ENCODE measurements at regions of chr16 and their contacts with region 1.

Region 1: GRCh38 chr16:56700195-56700594 is 17.9 kb downstream of the MT1X start:
- DNase-seq: no peak
- H3K4me3 ChIP-seq: no peak overlapping the region
- H3K4me3 Mint-ChIP-seq: no peak overlapping the region
- H3K27ac ChIP-seq: no peak overlapping the region
- H3K27ac Mint-ChIP-seq: peak overlapping the region in 2 of 8 donors; percentile 9 to 13
- H3K4me1 ChIP-seq: peaks cover 11% of the 10 kb centered on the region
- H3K4me1 Mint-ChIP-seq: peaks cover 6 to 11% (median 10%) of the 10 kb centered on the region in 3 donors
- H3K27me3 ChIP-seq: no peaks in the 10 kb centered on the region
- H3K27me3 Mint-ChIP-seq: no peaks in the 10 kb centered on the region

Region 2: DNA sequence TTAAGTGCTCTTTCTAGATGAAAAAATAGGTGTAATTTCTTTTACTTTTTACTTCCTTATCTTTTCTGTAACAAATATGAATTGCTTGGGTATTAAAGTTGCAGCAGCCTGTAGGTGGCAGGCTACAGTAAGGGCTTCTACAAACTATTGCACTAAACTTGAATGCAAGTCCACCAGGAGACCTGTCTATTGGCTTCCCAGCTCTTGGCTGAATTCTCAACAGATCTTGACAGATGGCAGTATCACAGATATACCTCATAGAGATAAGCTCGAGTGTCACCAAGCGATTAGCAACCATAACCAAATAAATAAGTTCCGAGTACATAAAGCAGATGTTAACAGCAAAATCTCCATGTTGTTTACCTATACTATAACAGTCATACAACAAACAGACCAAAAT is 186.2 kb before region 1 on chr16:
- CTCF ChIA-PET with region 1: interaction called, 22 read pairs
- POLR2A ChIA-PET with region 1: no interaction called
- DNase-seq: peak; percentile 7 to 63 (median 42)
- H3K4me3 ChIP-seq: no peak overlapping the region
- H3K4me3 Mint-ChIP-seq: no peak overlapping the region
- H3K27ac ChIP-seq: no peak overlapping the region
- H3K27ac Mint-ChIP-seq: peak overlapping the region in 3 of 8 donors; percentile 6 to 24 (median 14)
- H3K4me1 ChIP-seq: peaks cover 13% of the 10 kb centered on the region
- H3K4me1 Mint-ChIP-seq: peaks cover 45 to 63% (median 60%) of the 10 kb centered on the region in 3 donors
- H3K27me3 ChIP-seq: no peaks in the 10 kb centered on the region
- H3K27me3 Mint-ChIP-seq: no peaks in the 10 kb centered on the region

Region 3: DNA sequence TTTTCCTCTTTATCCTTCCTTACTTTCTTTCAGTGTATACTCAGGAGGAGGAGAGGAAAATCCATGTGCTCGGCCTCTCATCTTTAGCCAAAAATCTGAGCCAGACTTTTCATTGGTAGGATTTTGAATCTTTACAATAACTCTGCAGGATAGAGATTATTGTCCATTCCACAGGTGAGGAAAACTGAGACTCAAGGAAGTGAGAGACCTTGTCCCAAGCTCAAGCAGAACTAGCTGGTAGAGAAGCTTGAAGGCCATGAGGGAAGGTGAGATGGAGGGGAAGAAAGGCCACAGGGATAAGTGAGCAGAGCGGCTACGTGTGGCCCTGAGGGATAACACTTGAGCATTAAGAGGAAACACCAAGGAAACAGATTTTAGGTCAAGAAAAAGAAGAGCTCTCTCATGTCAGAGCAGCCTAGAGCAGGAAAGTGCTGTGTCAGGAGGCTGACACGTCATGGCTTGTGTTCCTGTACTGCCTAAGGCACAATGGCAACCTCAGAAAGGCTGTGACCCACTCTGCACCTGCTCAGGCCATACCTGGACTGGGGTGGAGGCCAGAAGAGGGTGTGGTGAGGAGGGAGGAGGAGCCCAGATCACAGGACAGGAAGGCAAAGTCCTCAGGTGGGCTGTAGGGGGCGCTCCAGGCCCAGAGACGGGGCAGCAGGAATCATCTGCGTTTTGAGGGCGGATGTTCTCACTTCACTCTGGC is 123.5 kb before region 1 on chr16:
- CTCF ChIA-PET with region 1: interaction called, 65 read pairs
- POLR2A ChIA-PET with region 1: interaction called, 13 read pairs
- DNase-seq: peak; percentile 82 to 90 (median 87)
- H3K4me3 ChIP-seq: no peak overlapping the region
- H3K4me3 Mint-ChIP-seq: no peak overlapping the region
- H3K27ac ChIP-seq: no peak overlapping the region
- H3K27ac Mint-ChIP-seq: peak overlapping the region in 7 of 8 donors; percentile 6 to 94 (median 41)
- H3K4me1 ChIP-seq: peaks cover 4% of the 10 kb centered on the region
- H3K4me1 Mint-ChIP-seq: peaks cover 4 to 8% (median 7%) of the 10 kb centered on the region in 3 donors
- H3K27me3 ChIP-seq: no peaks in the 10 kb centered on the region
- H3K27me3 Mint-ChIP-seq: peaks cover 0 to 2% of the 10 kb centered on the region in 2 donors

Region 4: GRCh38 chr16:56608043-56608875 is 91.9 kb before region 1 on chr16 and contains the start of gene MT2A:
- CTCF ChIA-PET with region 1: interaction called, 29 read pairs
- POLR2A ChIA-PET with region 1: interaction called, 4 read pairs
- DNase-seq: peak; percentile 78 to 92 (median 83)
- H3K4me3 ChIP-seq: peak within 1 kb of the TSS; percentile 98
- H3K4me3 Mint-ChIP-seq: peak within 1 kb of the TSS; percentile 89 to 99 (median 95)
- H3K27ac ChIP-seq: peak within 1 kb of the TSS; percentile 64
- H3K27ac Mint-ChIP-seq: peak within 1 kb of the TSS; percentile 82 to 98 (median 96)
- H3K4me1 ChIP-seq: peaks cover 39% of the 10 kb centered on the region
- H3K4me1 Mint-ChIP-seq: peaks cover 46 to 51% (median 48%) of the 10 kb centered on the region in 3 donors
- H3K27me3 ChIP-seq: no peaks in the 10 kb centered on the region
- H3K27me3 Mint-ChIP-seq: peaks cover 0 to 2% of the 10 kb centered on the region in 2 donors
- total RNA-seq, gene MT2A: 285 to 349 TPM

Region 5: GRCh38 chr16:56673921-56674320 is 26.3 kb before region 1 on chr16:
- CTCF ChIA-PET with region 1: interaction called, 21 read pairs
- POLR2A ChIA-PET with region 1: interaction called, 3 read pairs
- DNase-seq: peak in 1 of 5 donors; percentile 43
- H3K4me3 ChIP-seq: no peak overlapping the region
- H3K4me3 Mint-ChIP-seq: peak overlapping the region in 1 of 7 donors; percentile 69
- H3K27ac ChIP-seq: no peak overlapping the region
- H3K27ac Mint-ChIP-seq: no peak overlapping the region
- H3K4me1 ChIP-seq: peaks cover 3% of the 10 kb centered on the region
- H3K4me1 Mint-ChIP-seq: peaks cover 11 to 21% (median 18%) of the 10 kb centered on the region in 3 donors
- H3K27me3 ChIP-seq: peaks cover 22% of the 10 kb centered on the region
- H3K27me3 Mint-ChIP-seq: peaks cover 30 to 39% of the 10 kb centered on the region in 2 donors

Region 6: DNA sequence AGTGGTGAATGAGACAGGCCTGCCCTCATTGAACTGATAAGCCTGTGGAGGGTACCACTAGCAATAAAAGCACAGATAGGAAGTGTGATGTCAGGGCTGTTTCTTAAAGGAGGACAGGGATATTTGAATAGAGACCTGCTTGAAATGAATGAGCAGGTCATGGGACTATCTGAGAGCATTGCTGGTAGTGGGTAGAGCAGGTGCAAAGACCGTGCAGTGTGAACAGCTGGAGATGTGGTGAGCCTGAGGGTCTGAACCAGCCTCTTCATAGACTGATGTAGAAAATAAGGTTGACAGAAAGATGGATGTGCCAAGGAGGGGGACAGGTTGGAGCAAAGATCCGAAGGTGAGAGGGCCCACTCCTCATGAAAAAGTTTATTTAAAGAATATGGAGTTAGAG is 32.2 kb after region 1 on chr16:
- CTCF ChIA-PET with region 1: no interaction called
- POLR2A ChIA-PET with region 1: no interaction called
- DNase-seq: no peak
- H3K4me3 ChIP-seq: no peak overlapping the region
- H3K4me3 Mint-ChIP-seq: no peak overlapping the region
- H3K27ac ChIP-seq: no peak overlapping the region
- H3K27ac Mint-ChIP-seq: no peak overlapping the region
- H3K4me1 ChIP-seq: peaks cover 35% of the 10 kb centered on the region
- H3K4me1 Mint-ChIP-seq: peaks cover 25 to 44% (median 25%) of the 10 kb centered on the region in 3 donors
- H3K27me3 ChIP-seq: no peaks in the 10 kb centered on the region
- H3K27me3 Mint-ChIP-seq: no peaks in the 10 kb centered on the region

Region 7: DNA sequence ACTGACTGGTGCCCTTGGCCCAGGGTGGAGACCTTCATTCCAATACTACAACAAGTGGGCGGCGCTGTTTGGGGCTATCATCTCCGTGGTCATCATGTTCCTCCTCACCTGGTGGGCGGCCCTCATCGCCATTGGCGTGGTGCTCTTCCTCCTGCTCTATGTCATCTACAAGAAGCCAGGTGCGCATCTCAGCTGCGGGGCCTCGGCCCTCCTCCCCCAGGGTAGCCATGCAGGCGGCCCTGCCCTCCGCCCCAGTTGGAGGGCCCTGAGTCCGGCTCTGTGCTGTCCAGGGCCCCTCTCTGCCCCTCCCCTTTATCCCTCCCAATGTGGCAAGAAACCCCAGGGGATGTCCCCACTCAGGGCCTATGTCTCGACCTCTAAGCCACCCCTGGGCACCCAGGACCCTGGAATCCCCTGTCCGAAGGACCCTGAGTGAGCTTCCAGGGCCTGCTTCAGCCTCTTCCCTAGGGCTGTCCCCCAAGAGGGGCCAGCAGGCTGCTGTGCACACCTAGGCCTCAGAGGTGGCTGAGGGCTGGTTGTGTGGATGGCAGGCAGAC is 183.9 kb after region 1 on chr16:
- CTCF ChIA-PET with region 1: no interaction called
- POLR2A ChIA-PET with region 1: no interaction called
- DNase-seq: no peak
- H3K4me3 ChIP-seq: no peak overlapping the region
- H3K4me3 Mint-ChIP-seq: no peak overlapping the region
- H3K27ac ChIP-seq: no peak overlapping the region
- H3K27ac Mint-ChIP-seq: no peak overlapping the region
- H3K4me1 ChIP-seq: no peaks in the 10 kb centered on the region
- H3K4me1 Mint-ChIP-seq: no peaks in the 10 kb centered on the region
- H3K27me3 ChIP-seq: no peaks in the 10 kb centered on the region
- H3K27me3 Mint-ChIP-seq: peaks cover 0 to 3% of the 10 kb centered on the region in 2 donors

Measured in CD8-positive, alpha-beta memory T cell (primary cell).